CD8-positive, alpha-beta T cell (primary cell): ENCODE measurements at regions of chr2 and their contacts with region 1.

Region 1: GRCh38 chr2:196639180-196640030 is at the start of gene CCDC150:
- DNase-seq: peak; percentile 89 to 96 (median 94)
- ATAC-seq: peak; percentile 100
- H3K4me3 ChIP-seq: peak within 1 kb of the TSS; percentile 68 to 85
- H3K4me3 Mint-ChIP-seq: peak within 1 kb of the TSS; percentile 86
- H3K27ac ChIP-seq: peak within 1 kb of the TSS; percentile 12 to 27
- H3K27ac Mint-ChIP-seq: peak within 1 kb of the TSS; percentile 38
- H3K4me1 ChIP-seq: peaks cover 7% of the 10 kb centered on the region
- H3K4me1 Mint-ChIP-seq: peaks cover 13% of the 10 kb centered on the region
- H3K27me3 ChIP-seq: no peaks in the 10 kb centered on the region
- H3K27me3 Mint-ChIP-seq: no peaks in the 10 kb centered on the region
- CTCF ChIP-seq: no peak
- total RNA-seq, gene CCDC150: 0.72 to 0.81 TPM

Region 2: GRCh38 chr2:195937176-195937575 is 702.2 kb before region 1 on chr2:
- CTCF ChIA-PET with region 1: no interaction called
- POLR2A ChIA-PET with region 1: no interaction called
- intact Hi-C with region 1: no loop called
- DNase-seq: no peak
- ATAC-seq: no peak
- H3K4me3 ChIP-seq: no peak overlapping the region
- H3K4me3 Mint-ChIP-seq: no peak overlapping the region
- H3K27ac ChIP-seq: no peak overlapping the region
- H3K27ac Mint-ChIP-seq: no peak overlapping the region
- H3K4me1 ChIP-seq: no peaks in the 10 kb centered on the region
- H3K4me1 Mint-ChIP-seq: no peaks in the 10 kb centered on the region
- H3K27me3 ChIP-seq: no peaks in the 10 kb centered on the region
- H3K27me3 Mint-ChIP-seq: no peaks in the 10 kb centered on the region
- CTCF ChIP-seq: no peak

Region 3: DNA sequence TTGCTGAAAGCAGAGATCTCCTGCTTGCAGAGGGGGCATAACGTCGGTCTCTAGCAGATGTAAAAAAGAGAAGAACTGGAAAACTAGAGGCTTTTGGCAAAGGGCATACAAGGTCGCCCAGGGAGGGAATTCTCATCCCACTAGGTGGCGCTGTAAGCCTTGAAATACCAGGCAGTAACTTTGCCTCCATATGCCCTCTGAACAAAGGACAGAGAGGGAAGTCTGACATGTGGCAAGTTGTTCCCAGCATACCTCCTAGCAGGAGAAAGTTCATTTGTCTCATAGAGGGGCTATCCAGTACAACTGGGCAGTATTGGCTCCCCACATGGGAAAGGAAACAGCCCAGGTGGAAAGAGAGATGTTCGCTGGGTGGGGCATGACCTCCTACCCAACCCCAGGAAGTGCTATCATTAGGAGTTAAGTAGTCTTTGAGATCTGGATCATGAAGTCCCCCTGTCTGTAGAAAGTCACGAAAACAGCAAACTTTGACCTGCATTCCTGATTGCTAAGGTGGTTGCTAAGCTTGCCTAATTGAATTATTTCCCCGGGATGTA is 507.9 kb before region 1 on chr2:
- CTCF ChIA-PET with region 1: no interaction called
- POLR2A ChIA-PET with region 1: no interaction called
- intact Hi-C with region 1: loop called in 1 of 2 experiments (anchors 5 kb)
- DNase-seq: peak in 8 of 9 experiments; percentile 43 to 78 (median 64)
- ATAC-seq: peak; percentile 24
- H3K4me3 ChIP-seq: no peak overlapping the region
- H3K4me3 Mint-ChIP-seq: no peak overlapping the region
- H3K27ac ChIP-seq: peak overlapping the region in 1 of 2 experiments; percentile 52
- H3K27ac Mint-ChIP-seq: peak overlapping the region; percentile 83
- H3K4me1 ChIP-seq: no peaks in the 10 kb centered on the region
- H3K4me1 Mint-ChIP-seq: peaks cover 31% of the 10 kb centered on the region
- H3K27me3 ChIP-seq: no peaks in the 10 kb centered on the region
- H3K27me3 Mint-ChIP-seq: no peaks in the 10 kb centered on the region
- CTCF ChIP-seq: peak; percentile 49

Region 4: GRCh38 chr2:196798980-196799379 is 159.6 kb after region 1 on chr2:
- CTCF ChIA-PET with region 1: no interaction called
- POLR2A ChIA-PET with region 1: no interaction called
- intact Hi-C with region 1: loop called (anchors 1 to 2 kb)
- DNase-seq: no peak
- ATAC-seq: peak; percentile 7
- H3K4me3 ChIP-seq: peak overlapping the region; percentile 71 to 76
- H3K4me3 Mint-ChIP-seq: peak overlapping the region; percentile 100
- H3K27ac ChIP-seq: peak overlapping the region; percentile 65 to 74
- H3K27ac Mint-ChIP-seq: peak overlapping the region; percentile 99
- H3K4me1 ChIP-seq: peaks cover 10% of the 10 kb centered on the region
- H3K4me1 Mint-ChIP-seq: peaks cover 36% of the 10 kb centered on the region
- H3K27me3 ChIP-seq: no peaks in the 10 kb centered on the region
- H3K27me3 Mint-ChIP-seq: peaks cover 12% of the 10 kb centered on the region
- CTCF ChIP-seq: no peak

Region 5: DNA sequence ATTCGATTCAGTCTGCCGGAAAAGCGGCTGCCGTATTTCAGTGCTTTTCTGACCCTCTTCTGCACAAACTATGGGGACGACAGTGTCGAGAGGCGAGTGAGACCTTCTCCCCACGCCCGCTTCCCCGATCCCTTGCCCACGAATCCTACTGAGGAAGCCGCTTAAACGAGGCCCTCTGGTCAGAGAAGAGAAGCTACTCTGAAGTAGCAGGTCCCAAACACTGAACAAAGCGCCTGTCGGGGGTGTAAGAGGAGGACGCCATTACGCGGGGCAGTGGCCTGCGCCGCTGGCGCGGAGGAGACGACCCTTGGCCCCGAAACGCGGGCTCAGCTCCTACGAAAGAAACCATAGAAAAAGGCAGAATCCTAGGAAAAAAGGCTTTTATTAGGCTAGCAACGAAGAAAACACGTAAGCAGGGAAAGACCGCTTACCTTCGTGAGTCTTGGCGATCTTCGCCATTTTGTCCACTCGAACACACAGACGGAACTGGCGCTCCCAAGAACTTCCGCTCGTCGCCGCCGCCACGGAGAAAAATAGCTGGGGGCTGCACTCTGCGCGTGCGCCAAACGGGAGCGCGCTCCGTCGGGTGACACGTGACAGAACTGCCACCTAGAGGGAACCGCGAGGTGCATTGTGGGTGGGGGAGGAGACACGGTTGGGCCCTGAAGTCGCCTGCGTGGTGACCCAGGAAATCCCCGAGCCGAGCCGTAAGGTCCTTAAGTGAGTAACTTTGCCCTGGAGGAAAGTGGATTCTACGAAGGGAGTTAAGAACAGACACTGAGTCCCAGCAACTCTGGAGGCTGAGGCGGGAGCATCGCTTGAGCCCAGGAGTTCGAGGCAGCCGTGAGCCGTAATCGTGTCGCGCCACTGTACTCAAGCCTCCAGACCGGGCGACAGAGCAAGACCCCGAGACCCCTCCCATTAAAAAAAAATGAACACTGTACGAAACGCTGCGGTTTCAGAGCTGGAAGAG is 795.4 kb after region 1 on chr2 and contains the start of gene SF3B1:
- CTCF ChIA-PET with region 1: no interaction called
- POLR2A ChIA-PET with region 1: no interaction called
- intact Hi-C with region 1: loop called (anchors 5 to 10 kb)
- DNase-seq: peak; percentile 98 to 100 (median 99)
- ATAC-seq: peak; percentile 96
- H3K4me3 ChIP-seq: peak within 1 kb of the TSS; percentile 95 to 99
- H3K4me3 Mint-ChIP-seq: peak within 1 kb of the TSS; percentile 100
- H3K27ac ChIP-seq: peak within 1 kb of the TSS; percentile 98 to 99
- H3K27ac Mint-ChIP-seq: peak within 1 kb of the TSS; percentile 100
- H3K4me1 ChIP-seq: peaks cover 43% of the 10 kb centered on the region
- H3K4me1 Mint-ChIP-seq: peaks cover 53% of the 10 kb centered on the region
- H3K27me3 ChIP-seq: no peaks in the 10 kb centered on the region
- H3K27me3 Mint-ChIP-seq: no peaks in the 10 kb centered on the region
- CTCF ChIP-seq: no peak
- total RNA-seq, gene SF3B1: 525 to 526 TPM

Region 6: GRCh38 chr2:197515739-197516392 is 876.5 kb after region 1 on chr2 and contains the start of gene MOB4:
- CTCF ChIA-PET with region 1: no interaction called
- POLR2A ChIA-PET with region 1: interaction called, 3 read pairs
- intact Hi-C with region 1: loop called (anchors 10 kb)
- DNase-seq: peak; percentile 90 to 97 (median 93)
- ATAC-seq: peak; percentile 90
- H3K4me3 ChIP-seq: peak within 1 kb of the TSS; percentile 73 to 94
- H3K4me3 Mint-ChIP-seq: peak within 1 kb of the TSS; percentile 92
- H3K27ac ChIP-seq: peak within 1 kb of the TSS; percentile 88 to 99
- H3K27ac Mint-ChIP-seq: peak within 1 kb of the TSS; percentile 93
- H3K4me1 ChIP-seq: peaks cover 22% of the 10 kb centered on the region
- H3K4me1 Mint-ChIP-seq: peaks cover 44% of the 10 kb centered on the region
- H3K27me3 ChIP-seq: no peaks in the 10 kb centered on the region
- H3K27me3 Mint-ChIP-seq: no peaks in the 10 kb centered on the region
- CTCF ChIP-seq: no peak
- total RNA-seq, gene MOB4: 32.1 to 36.5 TPM